ENCODE measurements at regions of chr1 and their contacts with region 1.

Region 1: DNA sequence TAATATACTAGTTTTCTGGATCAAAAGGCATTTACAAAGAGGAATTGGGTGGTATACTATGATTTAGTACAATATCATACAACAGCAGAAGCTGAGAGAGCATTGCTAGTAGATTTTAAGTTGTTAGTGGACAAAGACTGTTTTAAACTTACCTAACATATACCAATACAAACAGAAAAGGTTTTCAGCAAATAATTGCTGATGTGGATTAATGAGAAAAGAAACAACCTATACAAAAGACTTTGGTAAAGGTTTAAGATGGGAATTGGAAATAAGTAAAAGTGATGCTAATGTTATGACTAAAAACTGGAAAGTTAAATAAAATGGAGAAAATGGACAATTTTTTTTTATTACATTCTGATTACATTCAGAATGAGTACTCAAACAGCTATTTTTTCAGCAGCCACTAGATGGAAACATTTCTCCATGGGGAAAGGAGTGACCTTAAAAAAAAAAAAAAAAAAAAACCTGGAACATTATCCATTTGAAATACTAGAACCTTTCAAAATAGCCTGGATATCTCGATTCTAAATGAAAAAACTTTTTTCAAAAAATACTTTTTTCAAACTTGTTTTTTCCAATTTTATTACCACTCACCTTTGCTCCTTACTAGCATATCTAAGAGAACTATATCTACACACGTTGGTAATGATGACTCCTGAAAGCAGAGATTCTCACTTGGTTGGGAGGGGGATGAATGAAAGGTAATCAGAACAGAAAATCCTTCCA is 55.4 kb downstream of the EPRS1 start:
- DNase-seq: no peak
- ATAC-seq: no peak
- H3K4me3 ChIP-seq: no peak overlapping the region
- H3K27ac ChIP-seq: no peak overlapping the region
- H3K4me1 ChIP-seq: no peaks in the 10 kb centered on the region
- H3K27me3 ChIP-seq: no peaks in the 10 kb centered on the region
- CTCF ChIP-seq: peak; percentile 39 to 74 (median 54)
- POLR2A ChIP-seq: no peak

Region 2: GRCh38 chr1:219837994-219838294 is 153.0 kb before region 1 on chr1:
- intact Hi-C with region 1: loop called in 1 of 10 experiments (anchors 2 kb)
- DNase-seq: no peak
- ATAC-seq: no peak
- H3K4me3 ChIP-seq: no peak overlapping the region
- H3K27ac ChIP-seq: no peak overlapping the region
- H3K4me1 ChIP-seq: no peaks in the 10 kb centered on the region
- H3K27me3 ChIP-seq: peaks cover 0 to 8% (median 0%) of the 10 kb centered on the region in 9 donors
- CTCF ChIP-seq: peak in 1 of 12 donors; percentile 29
- POLR2A ChIP-seq: no peak

Region 3: GRCh38 chr1:219973213-219973612 is 17.7 kb before region 1 on chr1:
- intact Hi-C with region 1: no loop called
- DNase-seq: no peak
- ATAC-seq: no peak
- H3K4me3 ChIP-seq: no peak overlapping the region
- H3K27ac ChIP-seq: no peak overlapping the region
- H3K4me1 ChIP-seq: no peaks in the 10 kb centered on the region
- H3K27me3 ChIP-seq: no peaks in the 10 kb centered on the region
- CTCF ChIP-seq: no peak
- POLR2A ChIP-seq: no peak

Region 4: DNA sequence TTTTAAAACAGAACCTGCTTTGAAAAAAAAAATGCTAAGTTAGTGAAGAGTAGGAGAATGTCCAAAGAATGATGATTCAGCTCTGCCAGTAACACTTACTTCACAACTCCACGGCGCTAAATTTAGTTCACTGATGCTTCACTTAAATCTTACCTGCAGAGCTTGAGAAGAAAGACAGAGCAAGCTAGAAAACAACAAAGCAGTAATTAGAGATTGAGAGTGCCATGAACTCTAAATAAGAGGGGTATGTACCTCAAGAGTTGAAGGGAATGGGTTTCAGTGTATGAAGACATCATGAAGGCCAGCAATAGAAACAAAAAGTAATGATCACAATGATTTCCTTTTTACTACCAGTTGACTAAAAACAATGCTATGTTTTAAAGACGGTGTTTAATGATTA is 22.6 kb after region 1 on chr1:
- intact Hi-C with region 1: loop called in 1 of 10 experiments (anchors 1 kb)
- DNase-seq: no peak
- ATAC-seq: peak in 1 of 4 donors; percentile 53
- H3K4me3 ChIP-seq: no peak overlapping the region
- H3K27ac ChIP-seq: peak overlapping the region in 1 of 12 donors; percentile 4
- H3K4me1 ChIP-seq: peaks cover 0 to 16% (median 2%) of the 10 kb centered on the region in 12 donors
- H3K27me3 ChIP-seq: no peaks in the 10 kb centered on the region
- CTCF ChIP-seq: no peak
- POLR2A ChIP-seq: no peak

Measured in heart left ventricle (tissue), 16 donors.